ENCODE measurements at regions of chr16 and their contacts with region 1.

Region 1: DNA sequence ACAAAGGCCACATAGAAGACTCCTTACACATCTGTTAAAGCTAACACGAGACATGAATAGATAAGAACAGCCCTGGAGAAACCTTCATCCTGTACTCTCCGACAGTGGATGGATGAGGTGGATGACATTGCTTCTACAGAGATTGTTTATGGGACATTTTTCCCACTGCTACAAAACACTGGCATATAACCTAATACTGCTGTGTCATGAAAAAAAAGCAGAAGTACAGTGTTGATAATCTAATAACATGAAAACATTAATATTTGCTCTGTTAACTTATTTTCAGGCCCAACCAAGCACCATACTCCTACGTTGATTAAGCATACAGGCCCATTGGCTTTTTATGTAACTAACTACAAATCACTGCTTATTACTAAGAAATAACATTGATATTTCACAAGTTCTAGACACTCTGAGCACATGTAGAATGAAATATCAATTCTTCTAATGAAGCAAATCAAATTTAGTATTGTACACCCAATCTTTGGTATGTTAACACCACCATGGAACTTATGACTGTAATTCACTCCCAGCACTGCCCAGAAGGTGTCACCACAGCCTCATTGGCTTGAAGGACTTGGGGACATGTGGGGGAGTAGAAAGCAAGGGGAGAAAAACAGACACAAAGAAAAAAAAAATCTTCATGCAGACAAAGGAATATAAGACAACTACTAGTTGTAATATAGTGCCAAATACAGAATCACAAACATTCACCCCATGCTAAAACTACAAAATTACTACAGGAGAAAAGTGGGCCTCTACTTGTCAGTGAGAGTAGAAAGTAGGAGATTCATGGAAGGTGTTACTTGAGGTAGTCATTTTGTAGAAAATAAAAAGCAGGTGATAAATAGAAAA is 330.0 kb upstream of the PMFBP1 start:
- DNase-seq: peak in 1 of 2 experiments; percentile 41
- H3K4me3 ChIP-seq: no peak overlapping the region
- H3K27ac ChIP-seq: no peak overlapping the region
- H3K4me1 ChIP-seq: no peaks in the 10 kb centered on the region
- H3K27me3 ChIP-seq: no peaks in the 10 kb centered on the region
- CTCF ChIP-seq: peak; percentile 85

Region 2: GRCh38 chr16:72162105-72162692 is 339.8 kb before region 1 on chr16:
- CTCF ChIA-PET with region 1: no interaction called
- POLR2A ChIA-PET with region 1: no interaction called
- intact Hi-C with region 1: no loop called
- DNase-seq: no peak
- H3K4me3 ChIP-seq: no peak overlapping the region
- H3K27ac ChIP-seq: no peak overlapping the region
- H3K4me1 ChIP-seq: no peaks in the 10 kb centered on the region
- H3K27me3 ChIP-seq: peaks cover 91% of the 10 kb centered on the region
- CTCF ChIP-seq: no peak

Region 3: DNA sequence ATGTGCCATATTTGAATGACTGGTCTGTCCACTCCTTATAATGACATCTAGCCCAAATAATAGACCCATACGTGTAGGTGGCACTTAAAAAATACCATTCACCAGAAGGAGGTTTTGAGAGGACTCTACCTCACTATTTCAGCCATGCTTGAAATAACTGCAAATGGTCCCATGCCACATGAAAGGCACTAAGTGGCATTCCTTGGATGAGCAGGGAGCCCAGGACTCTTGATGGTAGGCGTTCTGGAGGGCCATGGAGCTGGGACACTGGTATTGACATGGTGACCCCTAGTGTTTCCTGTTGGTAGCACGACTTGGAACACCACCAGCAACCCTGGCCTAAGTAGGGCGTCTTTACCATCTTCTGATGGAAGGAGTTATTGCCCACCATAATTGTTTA is 694.7 kb after region 1 on chr16:
- CTCF ChIA-PET with region 1: no interaction called
- POLR2A ChIA-PET with region 1: no interaction called
- intact Hi-C with region 1: loop called (anchors 5 kb)
- DNase-seq: peak; percentile 38 to 49
- H3K4me3 ChIP-seq: no peak overlapping the region
- H3K27ac ChIP-seq: no peak overlapping the region
- H3K4me1 ChIP-seq: no peaks in the 10 kb centered on the region
- H3K27me3 ChIP-seq: peaks cover 2% of the 10 kb centered on the region; the same call in 1 of the 2 replicates
- CTCF ChIP-seq: peak; percentile 70

Region 4: GRCh38 chr16:73217654-73218053 is 715.7 kb after region 1 on chr16:
- CTCF ChIA-PET with region 1: no interaction called
- POLR2A ChIA-PET with region 1: no interaction called
- intact Hi-C with region 1: loop called (anchors 5 kb)
- DNase-seq: no peak
- H3K4me3 ChIP-seq: no peak overlapping the region
- H3K27ac ChIP-seq: no peak overlapping the region
- H3K4me1 ChIP-seq: no peaks in the 10 kb centered on the region
- H3K27me3 ChIP-seq: peaks cover 3% of the 10 kb centered on the region; the same call in 1 of the 2 replicates
- CTCF ChIP-seq: peak; percentile 55

Region 5: DNA sequence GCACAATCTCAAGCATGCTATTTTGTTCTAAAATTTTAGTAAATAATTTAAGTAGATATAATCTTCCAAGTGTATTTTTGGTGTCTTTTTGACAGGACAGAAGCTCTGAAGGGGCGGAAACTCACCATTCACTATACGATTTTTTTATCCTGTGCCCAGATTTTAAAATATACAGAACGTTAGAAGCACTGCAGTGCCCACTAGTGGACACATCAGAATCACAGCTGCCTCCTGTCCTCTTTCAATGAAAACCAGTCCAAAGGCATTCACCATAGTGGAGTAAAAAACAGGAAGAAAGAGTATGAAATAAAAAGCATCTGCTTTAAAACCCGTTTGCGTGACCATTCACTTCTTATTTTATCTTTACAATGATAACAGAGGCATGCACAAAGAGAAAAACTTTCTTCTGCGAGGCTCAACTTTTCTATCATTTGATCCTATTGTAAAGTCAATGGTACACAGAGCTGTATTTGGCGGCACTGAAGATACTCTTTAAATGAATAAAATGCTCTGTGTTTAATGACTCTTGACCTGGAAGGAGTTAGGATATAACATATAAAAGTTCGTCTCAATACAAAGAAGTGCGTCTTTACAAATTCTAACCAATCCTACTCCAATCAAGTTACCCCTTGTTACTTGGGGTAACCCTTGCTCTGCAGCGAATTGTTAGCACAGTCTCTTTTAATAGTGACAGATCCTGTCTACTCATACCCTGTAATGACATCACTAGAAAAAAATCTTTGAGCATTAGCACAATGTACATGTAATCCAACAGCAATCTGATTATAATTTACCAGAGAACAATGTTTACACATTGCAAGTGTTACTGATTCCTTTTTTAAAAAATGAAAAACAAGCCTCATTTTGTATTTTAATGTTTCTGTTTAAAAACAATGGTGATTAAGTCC is 1454.9 kb after region 1 on chr16:
- CTCF ChIA-PET with region 1: no interaction called
- POLR2A ChIA-PET with region 1: no interaction called
- intact Hi-C with region 1: loop called (anchors 1 kb)
- DNase-seq: peak in 1 of 2 experiments; percentile 35
- H3K4me3 ChIP-seq: no peak overlapping the region
- H3K27ac ChIP-seq: no peak overlapping the region
- H3K4me1 ChIP-seq: no peaks in the 10 kb centered on the region
- H3K27me3 ChIP-seq: 0 out of 2 replicates have a peak, but pooled peaks cover 3% of the 10 kb centered on the region
- CTCF ChIP-seq: peak; percentile 82

Measured in PC-9 (cell line).